GM18951 (cell line): ENCODE measurements at regions of chr14 and their contacts with region 1.

Region 1: DNA sequence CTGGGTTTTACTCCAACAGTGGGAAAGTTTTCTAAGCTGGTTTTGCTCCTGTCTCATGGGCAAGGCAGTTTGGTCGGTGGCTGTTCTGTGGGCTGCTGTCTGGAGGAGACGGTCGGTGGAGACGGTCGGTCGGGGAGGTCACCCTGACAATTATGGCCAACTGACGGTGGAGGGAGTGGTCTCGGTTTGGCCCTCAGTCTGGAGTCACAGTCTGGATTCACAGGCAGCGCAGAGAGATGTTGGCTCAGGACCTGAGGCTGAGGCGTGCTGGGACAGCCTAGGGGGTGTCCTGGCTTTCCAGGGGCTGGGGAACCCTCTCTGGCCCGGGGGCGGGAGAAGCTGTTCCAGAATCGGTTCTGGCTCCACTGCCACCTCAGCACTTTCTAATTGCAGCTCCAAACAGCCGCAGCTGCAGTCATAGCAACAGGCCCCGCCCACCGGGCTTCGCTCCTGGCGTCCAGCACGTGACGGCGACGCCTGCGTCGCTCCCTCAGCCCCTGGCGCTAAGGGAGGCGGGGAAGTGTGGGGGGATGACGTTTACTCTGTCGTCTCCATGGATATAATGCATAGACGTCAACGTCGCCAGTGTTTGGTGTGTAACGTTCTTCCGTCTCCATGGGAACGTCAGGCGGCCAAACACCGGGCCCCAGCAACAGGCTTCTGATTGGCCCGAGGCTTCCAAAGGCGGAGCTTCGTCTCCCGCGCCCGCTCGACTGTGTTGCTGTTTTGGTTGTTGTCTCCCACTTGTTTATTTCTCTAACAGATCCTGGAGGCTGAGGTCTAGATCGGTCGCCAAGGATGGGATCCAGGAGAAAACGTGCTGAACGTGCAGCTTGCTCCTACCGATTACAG is 19.8 kb upstream of the FOS start:
- POLR2A ChIP-seq: no peak

Region 2: DNA sequence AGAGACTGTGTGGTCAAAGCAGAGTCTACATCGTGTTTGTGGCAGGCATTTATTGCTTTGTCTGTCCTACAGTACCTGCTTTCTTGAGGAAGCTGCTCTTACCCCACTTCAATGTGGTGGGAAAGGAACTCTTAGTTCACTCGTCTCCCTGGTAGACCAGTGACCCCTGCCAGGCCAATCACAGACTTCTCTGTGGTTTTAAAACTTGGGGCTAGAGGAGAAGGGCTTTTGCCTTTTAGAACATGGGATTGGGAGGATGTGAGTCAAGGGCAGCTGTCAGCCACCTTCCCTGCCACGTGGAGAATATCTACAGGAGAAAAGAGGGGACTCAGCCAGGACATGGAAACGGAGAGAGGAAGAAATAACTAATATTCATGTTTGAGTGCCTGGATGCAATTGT is 45.7 kb before region 1 on chr14:
- in situ Hi-C with region 1: loop called (anchors 5 kb)
- POLR2A ChIP-seq: no peak